Esophagus squamous epithelium (tissue), 5 donors: ENCODE measurements at regions of chr11 and their contacts with region 1.

Region 1: GRCh38 chr11:130216611-130217132 is 57.1 kb downstream of the ST14 start:
- DNase-seq: no peak
- H3K4me3 ChIP-seq: no peak overlapping the region
- H3K27ac ChIP-seq: no peak overlapping the region
- H3K4me1 ChIP-seq: peaks cover 0 to 16% (median 4%) of the 10 kb centered on the region in 3 donors
- H3K27me3 ChIP-seq: no peaks in the 10 kb centered on the region
- CTCF ChIP-seq: no peak
- POLR2A ChIP-seq: no peak

Region 2: GRCh38 chr11:129950101-129951091 is 266.3 kb before region 1 on chr11:
- intact Hi-C with region 1: no loop called
- DNase-seq: no peak
- H3K4me3 ChIP-seq: no peak overlapping the region
- H3K27ac ChIP-seq: peak overlapping the region in 2 of 4 donors; percentile 4 to 41
- H3K4me1 ChIP-seq: no peaks in the 10 kb centered on the region
- H3K27me3 ChIP-seq: no peaks in the 10 kb centered on the region
- CTCF ChIP-seq: no peak
- POLR2A ChIP-seq: no peak

Region 3: GRCh38 chr11:130427581-130428315 is 211.1 kb after region 1 on chr11:
- intact Hi-C with region 1: loop called (anchors 5 kb)
- DNase-seq: no peak
- H3K4me3 ChIP-seq: peak overlapping the region; percentile 10 to 69 (median 45)
- H3K27ac ChIP-seq: peak overlapping the region in 3 of 4 donors; percentile 59 to 79 (median 75)
- H3K4me1 ChIP-seq: peaks cover 16 to 39% (median 19%) of the 10 kb centered on the region in 3 donors
- H3K27me3 ChIP-seq: peaks cover 7 to 85% (median 11%) of the 10 kb centered on the region in 4 donors
- CTCF ChIP-seq: peak in 1 of 6 experiments; percentile 4
- POLR2A ChIP-seq: no peak

Region 4: DNA sequence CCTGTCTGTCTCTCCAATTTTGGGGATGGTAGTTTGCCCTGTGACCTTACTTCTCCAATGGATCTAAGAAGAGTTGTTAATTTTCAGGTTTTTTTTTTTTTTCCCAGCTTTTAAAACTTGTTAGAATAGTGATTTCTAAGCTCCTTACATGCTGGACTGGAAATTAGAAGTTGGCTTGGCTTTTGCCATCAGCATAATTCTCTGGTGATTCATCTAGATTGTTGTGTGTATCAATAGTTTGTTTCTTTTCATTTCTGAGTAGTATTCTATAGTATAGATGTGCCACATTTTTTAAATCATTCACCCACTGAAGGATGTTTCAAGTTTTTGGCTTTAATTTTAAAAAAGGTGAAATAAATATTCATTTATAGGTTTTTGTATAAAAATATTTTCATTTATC is 283.2 kb after region 1 on chr11:
- intact Hi-C with region 1: no loop called
- DNase-seq: no peak
- H3K4me3 ChIP-seq: no peak overlapping the region
- H3K27ac ChIP-seq: no peak overlapping the region
- H3K4me1 ChIP-seq: no peaks in the 10 kb centered on the region
- H3K27me3 ChIP-seq: no peaks in the 10 kb centered on the region
- CTCF ChIP-seq: no peak
- POLR2A ChIP-seq: no peak